Endothelial cell of umbilical vein (primary cell): ENCODE measurements at regions of chr18 and their contacts with region 1.

Region 1: DNA sequence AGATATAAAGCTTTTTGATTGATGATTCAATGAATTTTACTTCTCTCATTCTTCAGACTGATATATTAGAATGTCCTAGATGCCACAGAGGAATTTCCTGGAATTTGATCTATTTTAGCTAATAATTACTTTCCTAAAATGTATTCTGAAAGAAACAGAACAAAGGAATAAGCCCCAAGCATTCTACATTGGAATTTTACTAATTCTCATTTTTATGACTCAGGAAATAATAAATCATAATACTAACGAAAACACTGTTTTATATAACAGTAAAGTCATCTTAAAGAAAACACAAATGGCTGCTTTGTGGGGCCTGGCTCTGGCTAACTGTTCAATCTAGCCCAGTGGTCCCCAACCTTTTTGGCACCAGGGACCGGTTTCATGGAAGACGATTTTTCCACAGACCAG is 68.6 kb upstream of the LPIN2 start:
- DNase-seq: peak; percentile 75
- H3K4me3 ChIP-seq: no peak overlapping the region
- H3K27ac ChIP-seq: peak overlapping the region; percentile 53
- H3K4me1 ChIP-seq: peaks cover 37% of the 10 kb centered on the region
- H3K27me3 ChIP-seq: no peaks in the 10 kb centered on the region
- CTCF ChIP-seq: no peak
- POLR2A ChIP-seq: no peak

Region 2: DNA sequence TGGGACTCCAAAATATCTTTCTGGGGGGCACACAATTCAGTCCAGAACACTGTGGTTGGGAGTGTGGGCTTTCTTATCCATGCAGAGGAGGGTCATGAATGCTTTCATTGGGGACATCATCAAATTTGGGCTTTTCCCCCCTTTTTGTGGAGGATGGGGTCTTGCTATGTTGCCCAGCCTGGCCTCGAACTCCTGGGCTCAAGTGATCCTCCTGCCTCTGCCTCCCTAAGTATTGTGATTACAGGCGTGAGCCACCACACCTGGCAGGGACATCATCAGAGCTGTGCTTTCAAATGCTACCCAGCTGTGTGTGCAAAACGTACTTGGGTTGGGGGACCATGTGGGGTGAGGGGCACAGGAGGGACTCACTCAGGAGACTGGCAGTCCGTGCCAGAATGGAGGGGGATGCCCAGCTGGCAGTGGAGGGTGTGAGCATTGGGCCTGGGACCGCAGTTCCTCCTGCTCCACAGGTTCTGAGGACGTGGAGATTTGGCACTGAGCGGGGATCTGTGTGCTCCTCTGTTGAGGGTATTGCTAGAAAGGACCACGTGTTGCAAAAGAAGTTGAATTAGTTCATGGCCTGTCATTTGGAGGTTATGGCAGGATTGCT is 210.4 kb before region 1 on chr18:
- CTCF ChIA-PET with region 1: no interaction called
- POLR2A ChIA-PET with region 1: no interaction called
- dilution Hi-C with region 1: no loop called
- intact Hi-C with region 1: no loop called
- DNase-seq: no peak
- H3K4me3 ChIP-seq: no peak overlapping the region
- H3K27ac ChIP-seq: no peak overlapping the region
- H3K4me1 ChIP-seq: no peaks in the 10 kb centered on the region
- H3K27me3 ChIP-seq: peaks cover 0 to 7% of the 10 kb centered on the region in 2 experiments
- CTCF ChIP-seq: no peak
- POLR2A ChIP-seq: no peak

Region 3: GRCh38 chr18:2958819-2959298 is 122.7 kb before region 1 on chr18:
- CTCF ChIA-PET with region 1: no interaction called
- POLR2A ChIA-PET with region 1: no interaction called
- dilution Hi-C with region 1: no loop called
- intact Hi-C with region 1: no loop called
- DNase-seq: no peak
- H3K4me3 ChIP-seq: no peak overlapping the region
- H3K27ac ChIP-seq: no peak overlapping the region
- H3K4me1 ChIP-seq: no peaks in the 10 kb centered on the region
- H3K27me3 ChIP-seq: no peaks in the 10 kb centered on the region
- CTCF ChIP-seq: no peak
- POLR2A ChIP-seq: no peak

Region 4: DNA sequence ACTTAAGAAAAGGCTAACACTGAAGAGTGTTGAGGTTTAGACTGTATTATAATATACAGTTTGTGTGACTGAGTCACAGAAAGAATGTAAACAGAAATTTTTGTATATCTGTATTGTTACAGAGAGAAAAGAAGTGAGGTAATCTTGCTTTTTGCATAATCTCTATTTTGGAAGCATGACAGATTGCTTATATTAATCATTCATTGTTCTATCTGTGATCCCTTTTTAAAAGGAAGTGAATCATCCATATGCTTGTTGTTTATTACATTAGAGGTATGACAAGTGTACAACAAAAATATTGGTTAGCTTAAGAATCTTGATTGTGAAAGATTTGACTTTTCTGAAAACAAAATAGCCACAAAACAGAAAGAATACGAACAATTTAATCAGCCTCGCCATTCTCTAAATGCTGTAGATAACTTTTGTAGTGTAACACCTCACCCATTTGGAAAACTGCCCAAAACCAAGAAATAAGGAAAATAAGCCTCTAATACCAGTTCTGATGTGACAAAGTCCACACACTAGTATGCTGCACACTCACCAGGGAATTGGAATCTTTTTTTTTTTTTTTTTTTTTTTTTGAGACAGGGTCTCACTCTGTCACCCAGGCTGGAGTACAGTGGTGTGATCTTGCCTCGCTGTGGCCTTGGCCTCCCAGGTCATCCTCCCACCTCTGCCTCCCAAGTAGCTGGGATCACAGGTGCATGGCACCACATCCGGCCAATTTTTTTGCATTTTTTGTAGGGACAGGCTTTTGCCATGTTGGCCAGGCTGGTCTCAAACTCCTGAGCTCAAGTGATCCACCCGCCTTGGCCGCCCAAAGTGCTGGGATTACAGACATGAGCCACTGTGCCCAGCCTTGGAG is 22.8 kb after region 1 on chr18:
- CTCF ChIA-PET with region 1: interaction called, 3 read pairs
- POLR2A ChIA-PET with region 1: no interaction called
- dilution Hi-C with region 1: no loop called
- intact Hi-C with region 1: loop called (anchors 1 kb)
- DNase-seq: peak; percentile 91
- H3K4me3 ChIP-seq: peak overlapping the region in 1 of 3 experiments; percentile 21
- H3K27ac ChIP-seq: peak overlapping the region; percentile 96
- H3K4me1 ChIP-seq: peaks cover 30% of the 10 kb centered on the region
- H3K27me3 ChIP-seq: no peaks in the 10 kb centered on the region
- CTCF ChIP-seq: no peak
- POLR2A ChIP-seq: no peak